ENCODE measurements at regions of chr1 and their contacts with region 1.

Region 1: DNA sequence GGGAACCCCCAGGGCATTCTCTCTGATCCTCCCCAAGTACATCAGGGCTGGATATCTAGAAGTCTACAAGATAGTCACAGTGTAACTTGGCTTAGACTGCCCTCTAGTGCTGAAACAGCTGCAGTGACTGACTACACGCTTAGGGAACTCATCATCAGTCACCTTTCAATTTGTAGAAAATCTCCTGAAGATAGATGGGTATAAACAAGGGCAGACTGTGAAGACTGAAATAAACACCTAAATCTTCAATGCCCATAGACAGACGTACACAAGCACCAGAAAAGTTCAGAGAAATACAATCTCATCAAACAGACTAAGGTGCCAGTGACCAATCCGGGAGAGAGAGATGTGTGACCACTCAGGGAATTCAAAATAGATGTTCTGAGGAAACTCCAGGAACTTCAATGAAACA is 46.6 kb downstream of the PACC1 start:
- DNase-seq: peak in 1 of 2 donors; percentile 52
- ATAC-seq: peak; percentile 91 to 94
- H3K4me3 ChIP-seq: no peak overlapping the region
- H3K27ac ChIP-seq: no peak overlapping the region
- H3K4me1 ChIP-seq: peaks cover 7 to 8% of the 10 kb centered on the region in 2 donors
- H3K27me3 ChIP-seq: no peaks in the 10 kb centered on the region
- CTCF ChIP-seq: peak; percentile 72 to 91 (median 77)
- POLR2A ChIP-seq: no peak

Region 2: DNA sequence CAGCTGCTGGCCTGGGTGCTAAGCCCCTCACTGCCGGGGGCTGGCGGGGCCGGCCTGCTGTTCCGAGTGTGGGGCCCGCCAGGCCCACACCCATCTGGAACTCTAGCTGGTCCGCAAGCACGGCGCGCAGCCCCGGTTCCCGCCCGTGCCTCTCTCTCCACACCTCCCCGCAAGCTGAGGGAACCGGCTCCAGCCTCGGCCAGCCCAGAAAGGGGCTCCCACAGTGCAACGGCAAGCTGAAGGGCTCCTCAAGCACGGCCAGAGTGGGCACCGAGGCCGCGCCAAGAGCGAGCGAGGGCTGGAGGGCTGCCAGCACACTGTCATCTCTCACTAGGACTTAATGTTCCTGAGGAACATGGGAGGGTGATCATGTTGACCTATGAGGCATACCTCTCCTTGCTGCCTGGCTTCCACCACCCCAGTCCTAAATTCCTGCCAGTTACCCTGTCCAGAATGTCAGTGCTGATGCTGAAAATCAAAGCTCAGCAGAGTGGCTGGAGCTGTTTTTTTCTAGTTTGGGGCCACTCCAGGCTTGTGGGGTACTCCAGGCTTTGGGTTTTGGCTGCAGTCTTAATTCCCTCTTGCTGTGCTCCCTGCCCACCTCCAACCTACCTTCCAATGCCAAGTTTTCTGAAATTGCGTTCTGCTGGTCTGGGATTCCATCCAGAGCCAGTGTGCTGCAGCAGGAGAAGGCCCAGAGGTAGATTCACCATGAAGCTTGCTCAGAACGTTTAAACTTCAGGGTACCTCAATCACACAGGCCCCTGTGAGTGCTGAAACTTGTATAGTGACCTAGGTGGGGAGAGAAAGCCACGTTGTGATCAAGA is 493.3 kb before region 1 on chr1:
- in situ Hi-C with region 1: no loop called
- intact Hi-C with region 1: no loop called
- DNase-seq: peak in 1 of 2 donors; percentile 26
- ATAC-seq: no peak
- H3K4me3 ChIP-seq: no peak overlapping the region
- H3K27ac ChIP-seq: no peak overlapping the region
- H3K4me1 ChIP-seq: no peaks in the 10 kb centered on the region
- H3K27me3 ChIP-seq: no peaks in the 10 kb centered on the region
- CTCF ChIP-seq: no peak
- POLR2A ChIP-seq: no peak

Region 3: GRCh38 chr1:212030936-212031528 is 337.0 kb before region 1 on chr1:
- in situ Hi-C with region 1: no loop called
- intact Hi-C with region 1: no loop called
- DNase-seq: no peak
- ATAC-seq: no peak
- H3K4me3 ChIP-seq: no peak overlapping the region
- H3K27ac ChIP-seq: no peak overlapping the region
- H3K4me1 ChIP-seq: peaks cover 10 to 16% of the 10 kb centered on the region in 2 donors
- H3K27me3 ChIP-seq: no peaks in the 10 kb centered on the region
- CTCF ChIP-seq: no peak
- POLR2A ChIP-seq: no peak

Region 4: GRCh38 chr1:212062832-212063438 is 305.1 kb before region 1 on chr1:
- in situ Hi-C with region 1: loop called in 2 of 4 experiments (anchors 5 to 25 kb)
- intact Hi-C with region 1: no loop called
- DNase-seq: no peak
- ATAC-seq: peak; percentile 51 to 58
- H3K4me3 ChIP-seq: no peak overlapping the region
- H3K27ac ChIP-seq: no peak overlapping the region
- H3K4me1 ChIP-seq: no peaks in the 10 kb centered on the region
- H3K27me3 ChIP-seq: no peaks in the 10 kb centered on the region
- CTCF ChIP-seq: peak; percentile 38 to 66 (median 50)
- POLR2A ChIP-seq: no peak

Measured in gastrocnemius medialis (tissue), 4 donors.